Calu3 (cell line): ENCODE measurements at regions of chr12 and their contacts with region 1.

Region 1: GRCh38 chr12:119673634-119674033 is 5.7 kb downstream of the PRKAB1 start:
- DNase-seq: no peak
- H3K4me3 Mint-ChIP-seq: peak overlapping the region; percentile 50
- H3K27ac Mint-ChIP-seq: peak overlapping the region; percentile 75
- H3K4me1 Mint-ChIP-seq: peaks cover 52% of the 10 kb centered on the region
- H3K27me3 Mint-ChIP-seq: no peaks in the 10 kb centered on the region
- CTCF ChIP-seq: no peak

Region 2: DNA sequence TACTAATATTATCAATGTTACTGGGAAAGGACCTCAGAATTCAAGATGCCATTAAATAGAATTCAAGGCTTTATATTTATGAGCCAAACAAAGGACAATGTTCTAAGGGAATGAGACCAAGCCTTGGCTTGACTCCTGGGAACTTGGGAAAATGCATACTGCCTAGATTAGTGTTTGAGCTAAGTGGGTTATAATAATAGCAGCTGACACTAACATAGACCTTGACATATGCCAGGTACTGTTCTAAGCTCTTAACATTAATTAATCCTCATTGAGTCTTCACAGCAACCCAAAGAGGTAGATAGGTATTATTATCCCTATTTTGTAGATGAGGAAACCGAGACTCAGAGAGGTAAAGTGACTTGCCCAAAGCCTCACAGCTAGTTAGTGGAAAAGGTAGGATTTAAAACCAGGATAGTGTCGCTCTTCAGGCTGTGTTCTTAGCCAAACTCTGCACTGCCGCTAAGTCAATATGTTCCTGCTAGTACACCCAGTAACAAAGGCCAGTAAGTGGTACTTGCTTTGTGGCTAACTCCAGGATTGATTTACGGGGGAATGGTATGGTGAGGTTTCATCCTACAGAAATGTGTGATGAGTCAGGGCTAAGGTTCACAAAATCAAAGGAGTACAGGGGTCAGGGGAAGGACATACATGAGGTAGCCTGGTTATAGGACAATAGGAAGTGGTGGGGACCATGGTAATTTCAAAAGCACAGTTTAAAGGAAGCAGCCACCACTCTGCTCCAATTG is 41.5 kb before region 1 on chr12:
- CTCF ChIA-PET with region 1: no interaction called
- intact Hi-C with region 1: no loop called
- DNase-seq: no peak
- H3K4me3 Mint-ChIP-seq: no peak overlapping the region
- H3K27ac Mint-ChIP-seq: no peak overlapping the region
- H3K4me1 Mint-ChIP-seq: peaks cover 9% of the 10 kb centered on the region
- H3K27me3 Mint-ChIP-seq: peaks cover 36% of the 10 kb centered on the region
- CTCF ChIP-seq: no peak

Region 3: GRCh38 chr12:119684711-119685369 is 11.2 kb after region 1 on chr12:
- CTCF ChIA-PET with region 1: interaction called, 4 read pairs
- intact Hi-C with region 1: loop called (anchors 1 kb)
- DNase-seq: no peak
- H3K4me3 Mint-ChIP-seq: peak overlapping the region; percentile 44
- H3K27ac Mint-ChIP-seq: peak overlapping the region; percentile 46
- H3K4me1 Mint-ChIP-seq: peaks cover 62% of the 10 kb centered on the region
- H3K27me3 Mint-ChIP-seq: no peaks in the 10 kb centered on the region
- CTCF ChIP-seq: no peak

Region 4: GRCh38 chr12:119710352-119710964 is 36.8 kb after region 1 on chr12:
- CTCF ChIA-PET with region 1: interaction called, 8 read pairs
- intact Hi-C with region 1: loop called (anchors 2 kb)
- DNase-seq: peak; percentile 79
- H3K4me3 Mint-ChIP-seq: peak overlapping the region; percentile 46
- H3K27ac Mint-ChIP-seq: peak overlapping the region; percentile 40
- H3K4me1 Mint-ChIP-seq: peaks cover 35% of the 10 kb centered on the region
- H3K27me3 Mint-ChIP-seq: no peaks in the 10 kb centered on the region
- CTCF ChIP-seq: no peak

Region 5: DNA sequence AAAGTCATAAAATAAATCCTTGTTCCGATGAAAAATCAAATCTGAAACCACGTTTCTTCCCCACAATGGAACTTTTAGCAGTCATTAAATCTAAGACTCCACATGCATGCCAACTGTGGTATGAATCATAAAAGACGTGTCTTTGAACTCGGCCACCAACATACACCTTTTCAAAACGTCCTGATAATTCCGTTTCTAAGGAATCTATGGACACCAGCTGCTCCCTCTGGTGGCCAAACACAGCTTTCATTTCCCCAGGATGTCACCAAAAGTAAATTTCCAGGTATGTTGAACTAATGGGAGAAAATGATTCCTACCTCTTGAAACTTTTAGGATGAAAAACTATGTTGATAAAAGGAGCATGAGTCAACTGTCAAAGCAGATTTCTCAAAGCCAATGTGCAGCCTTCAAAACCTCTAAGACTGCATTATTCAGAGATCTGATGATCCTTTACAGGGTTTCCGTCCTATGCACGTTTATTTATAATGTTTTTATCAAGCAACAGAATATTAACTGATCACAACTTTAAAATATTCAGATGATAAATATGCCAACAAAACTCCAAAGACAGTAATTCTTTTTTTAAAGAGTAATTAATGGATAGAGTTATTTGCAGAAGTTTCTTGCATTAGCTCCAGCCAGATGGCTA is 107.3 kb after region 1 on chr12:
- CTCF ChIA-PET with region 1: interaction called, 16 read pairs
- intact Hi-C with region 1: loop called (anchors 1 kb)
- DNase-seq: peak; percentile 71
- H3K4me3 Mint-ChIP-seq: peak overlapping the region; percentile 26
- H3K27ac Mint-ChIP-seq: peak overlapping the region; percentile 15
- H3K4me1 Mint-ChIP-seq: peaks cover 14% of the 10 kb centered on the region
- H3K27me3 Mint-ChIP-seq: no peaks in the 10 kb centered on the region
- CTCF ChIP-seq: peak; percentile 70

Region 6: GRCh38 chr12:119843100-119843499 is 169.5 kb after region 1 on chr12:
- CTCF ChIA-PET with region 1: no interaction called
- intact Hi-C with region 1: no loop called
- DNase-seq: no peak
- H3K4me3 Mint-ChIP-seq: no peak overlapping the region
- H3K27ac Mint-ChIP-seq: no peak overlapping the region
- H3K4me1 Mint-ChIP-seq: no peaks in the 10 kb centered on the region
- H3K27me3 Mint-ChIP-seq: no peaks in the 10 kb centered on the region
- CTCF ChIP-seq: no peak